Calu3 (cell line): ENCODE measurements at regions of chr6 and their contacts with region 1.

Region 1: DNA sequence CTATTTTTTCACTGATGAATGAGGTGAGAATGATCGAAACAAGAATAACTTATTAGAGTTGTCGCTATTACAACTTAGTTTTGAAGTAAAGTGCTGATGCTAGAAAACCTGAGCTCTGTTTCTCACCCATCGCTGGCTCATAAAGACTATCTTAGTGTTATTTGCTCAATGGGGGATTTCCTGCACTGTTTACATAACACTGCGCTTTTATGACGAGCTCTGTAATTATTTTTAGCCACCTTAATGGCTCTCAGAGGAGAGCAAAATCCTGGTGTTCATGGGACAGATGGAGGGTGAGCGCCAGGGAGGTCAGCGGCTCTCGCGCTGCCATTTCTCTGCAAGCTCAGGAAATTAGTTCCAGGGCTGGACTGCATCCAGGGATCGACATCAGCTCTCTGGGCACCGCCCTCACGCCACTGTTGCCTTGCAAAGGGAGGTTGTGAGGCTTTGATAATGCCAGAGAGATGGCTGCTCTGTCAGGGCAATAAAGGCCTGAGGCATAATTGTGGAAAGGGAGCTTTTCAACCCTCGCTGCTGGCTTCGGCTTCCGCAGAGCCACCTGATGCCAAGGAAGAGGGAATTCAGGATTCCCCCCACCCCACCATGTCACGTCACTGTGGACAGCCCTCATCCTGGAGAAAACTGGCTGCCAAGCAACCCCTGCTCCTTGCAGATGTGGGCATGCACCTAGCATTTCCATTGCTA is 72.0 kb downstream of the DACT2 start:
- DNase-seq: peak; percentile 67
- H3K4me3 Mint-ChIP-seq: peak overlapping the region; percentile 24
- H3K27ac Mint-ChIP-seq: no peak overlapping the region
- H3K4me1 Mint-ChIP-seq: peaks cover 6% of the 10 kb centered on the region
- H3K27me3 Mint-ChIP-seq: peaks cover 92% of the 10 kb centered on the region
- CTCF ChIP-seq: no peak

Region 2: DNA sequence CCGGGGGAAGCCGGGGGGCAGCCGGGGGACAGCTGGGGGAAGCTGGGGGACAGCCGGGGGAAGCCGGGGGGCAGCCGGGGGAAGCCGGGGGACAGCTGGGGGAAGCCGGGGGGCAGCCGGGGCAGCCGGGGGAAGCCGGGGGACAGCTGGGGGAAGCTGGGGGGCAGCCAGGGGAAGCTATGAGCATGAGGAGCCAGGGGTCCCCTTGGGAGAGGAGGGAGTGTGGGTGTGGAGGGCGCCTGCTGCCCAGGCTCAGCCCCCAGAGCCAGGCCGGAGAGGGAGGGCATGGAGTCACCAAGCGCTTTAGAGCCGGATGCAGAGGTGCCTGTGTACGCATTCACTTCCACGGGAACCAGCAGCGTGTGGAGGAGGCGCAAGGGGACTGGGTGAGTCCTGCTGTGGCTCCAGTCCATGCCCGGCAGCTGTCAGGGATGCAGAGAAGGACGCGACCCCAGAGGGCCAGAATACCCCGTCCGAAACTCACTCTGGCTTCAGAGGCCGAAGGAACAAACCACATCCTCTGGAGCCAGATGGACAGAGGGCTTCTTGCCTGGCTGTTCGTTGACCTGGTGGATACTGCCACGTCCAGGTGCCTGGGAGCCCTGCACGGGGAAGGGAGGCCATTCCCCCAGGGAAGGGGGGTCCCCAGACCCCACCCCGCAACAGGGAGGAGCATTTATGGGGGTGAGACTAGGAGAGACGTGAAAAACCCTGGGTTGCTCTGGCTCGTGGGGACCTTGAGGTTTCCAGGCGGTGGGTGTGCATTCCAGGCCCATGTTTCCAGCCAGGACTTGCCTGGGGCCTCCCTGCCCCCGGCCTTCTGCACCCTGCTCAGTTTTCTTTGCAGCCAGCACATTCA is 98.5 kb after region 1 on chr6:
- CTCF ChIA-PET with region 1: interaction called, 14 read pairs
- intact Hi-C with region 1: no loop called
- DNase-seq: no peak
- H3K4me3 Mint-ChIP-seq: no peak overlapping the region
- H3K27ac Mint-ChIP-seq: no peak overlapping the region
- H3K4me1 Mint-ChIP-seq: peaks cover 10% of the 10 kb centered on the region
- H3K27me3 Mint-ChIP-seq: peaks cover 51% of the 10 kb centered on the region
- CTCF ChIP-seq: no peak